Mammary epithelial cell (primary cell): ENCODE measurements at regions of chr1 and their contacts with region 1.

Region 1: GRCh38 chr1:23303524-23303923 is 40.6 kb downstream of the HNRNPR start:
- DNase-seq: no peak
- H3K4me3 ChIP-seq: no peak overlapping the region
- H3K27ac ChIP-seq: no peak overlapping the region
- H3K4me1 ChIP-seq: no peaks in the 10 kb centered on the region
- H3K27me3 ChIP-seq: no peaks in the 10 kb centered on the region
- CTCF ChIP-seq: no peak

Region 2: GRCh38 chr1:23384302-23385058 is 81.0 kb after region 1 on chr1:
- CTCF ChIA-PET with region 1: no interaction called
- dilution Hi-C with region 1: loop called (anchors 10 kb)
- in situ Hi-C with region 1: no loop called
- intact Hi-C with region 1: no loop called
- DNase-seq: peak; percentile 77
- H3K4me3 ChIP-seq: no peak overlapping the region
- H3K27ac ChIP-seq: peak overlapping the region; percentile 19
- H3K4me1 ChIP-seq: peaks cover 27% of the 10 kb centered on the region
- H3K27me3 ChIP-seq: no peaks in the 10 kb centered on the region
- CTCF ChIP-seq: no peak